HCT116 (cell line): ENCODE measurements at regions of chr1 and their contacts with region 1.

Region 1: GRCh38 chr1:151539990-151540981 is at the start of gene TUFT1:
- DNase-seq: peak; percentile 85
- ATAC-seq: peak; percentile 93
- H3K4me3 ChIP-seq: peak within 1 kb of the TSS; percentile 76
- H3K27ac ChIP-seq: peak within 1 kb of the TSS; percentile 58
- H3K4me1 ChIP-seq: peaks cover 15 to 42% of the 10 kb centered on the region in 2 experiments
- H3K27me3 ChIP-seq: no peaks in the 10 kb centered on the region
- CTCF ChIP-seq: no peak
- POLR2A ChIP-seq: peak; percentile 95
- RAD21 ChIP-seq: no peak
- total RNA-seq, gene TUFT1: 12.3 TPM

Region 2: GRCh38 chr1:151733134-151733533 is 192.8 kb after region 1 on chr1:
- CTCF ChIA-PET with region 1: interaction called, 6 read pairs
- POLR2A ChIA-PET with region 1: interaction called, 10 read pairs
- RAD21 ChIA-PET with region 1: no interaction called
- intact Hi-C with region 1: no loop called
- DNase-seq: no peak
- ATAC-seq: no peak
- H3K4me3 ChIP-seq: no peak overlapping the region
- H3K27ac ChIP-seq: no peak overlapping the region
- H3K4me1 ChIP-seq: 0 out of 4 replicates have a peak, but pooled peaks cover 0 to 4% of the 10 kb centered on the region in 2 experiments
- H3K27me3 ChIP-seq: no peaks in the 10 kb centered on the region
- CTCF ChIP-seq: no peak
- POLR2A ChIP-seq: no peak
- RAD21 ChIP-seq: no peak